ENCODE measurements at regions of chr20 and their contacts with region 1.

Region 1: DNA sequence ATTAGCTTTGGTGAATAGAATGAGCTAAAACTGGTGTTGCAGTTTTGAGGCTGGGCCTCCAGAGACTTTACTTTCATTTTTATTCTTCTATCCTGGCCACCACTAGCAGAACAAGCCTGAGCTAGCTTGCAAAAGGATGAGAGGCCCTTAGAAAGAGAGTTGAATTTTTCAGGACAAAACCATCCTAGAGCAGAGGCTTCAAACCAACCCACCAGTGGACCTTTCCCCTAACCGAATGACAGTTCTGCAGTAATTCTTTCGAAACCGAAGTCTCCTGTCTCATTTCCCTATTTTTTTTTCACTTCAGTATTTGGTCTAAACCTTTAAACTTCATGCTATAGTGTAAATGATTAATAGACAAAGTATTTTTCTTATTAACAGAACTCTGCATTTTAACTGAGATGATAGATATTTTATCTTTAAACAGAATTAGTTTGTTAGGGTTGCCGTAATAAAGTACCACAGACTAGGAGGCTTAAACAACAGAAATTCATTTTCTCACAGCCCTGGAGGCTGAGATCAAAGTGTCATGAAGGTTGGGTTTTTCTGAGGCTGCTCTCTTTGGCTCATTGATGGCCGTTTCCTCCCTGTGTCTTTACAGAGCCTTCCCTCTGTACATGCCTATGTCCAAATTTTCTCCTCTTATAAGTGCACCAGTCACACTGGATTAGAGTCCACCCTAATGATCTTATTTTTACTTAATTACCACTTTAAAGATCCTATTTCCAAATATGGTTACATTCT is 80.6 kb upstream of the PAK5 start:
- DNase-seq: peak; percentile 34
- ATAC-seq: peak; percentile 83
- H3K4me3 ChIP-seq: peak overlapping the region; percentile 5; the same call in 1 of the 2 replicates
- H3K27ac ChIP-seq: peak overlapping the region; percentile 4; the same call in 1 of the 2 replicates
- H3K4me1 ChIP-seq: peaks cover 17% of the 10 kb centered on the region
- H3K27me3 ChIP-seq: no peaks in the 10 kb centered on the region
- CTCF ChIP-seq: no peak
- EP300 ChIP-seq: no peak; a peak in 1 of 4 replicates
- POLR2A ChIP-seq: no peak
- RAD21 ChIP-seq: no peak

Region 2: GRCh38 chr20:9903048-9903655 is 16.3 kb before region 1 on chr20:
- CTCF ChIA-PET with region 1: interaction called, 63 read pairs
- POLR2A ChIA-PET with region 1: no interaction called
- RAD21 ChIA-PET with region 1: no interaction called
- SMC1A ChIA-PET with region 1: interaction called, 6 read pairs
- in situ Hi-C with region 1: no loop called
- intact Hi-C with region 1: no loop called
- DNase-seq: no peak
- ATAC-seq: peak; percentile 53; the same call in 2 of the 3 replicates
- H3K4me3 ChIP-seq: no peak overlapping the region
- H3K27ac ChIP-seq: no peak overlapping the region
- H3K4me1 ChIP-seq: no peaks in the 10 kb centered on the region
- H3K27me3 ChIP-seq: no peaks in the 10 kb centered on the region; a peak in 1 of 4 replicates
- CTCF ChIP-seq: peak; percentile 44 to 61 (median 61)
- EP300 ChIP-seq: no peak
- POLR2A ChIP-seq: no peak
- RAD21 ChIP-seq: no peak

Measured in GM12878 (cell line).